ENCODE measurements at regions of chr2 and their contacts with region 1.

Region 1: GRCh38 chr2:168607992-168608391 is 151.9 kb downstream of the CERS6 start:
- DNase-seq: peak; percentile 44
- H3K4me3 Mint-ChIP-seq: no peak overlapping the region
- H3K27ac Mint-ChIP-seq: peak overlapping the region; percentile 86
- H3K4me1 Mint-ChIP-seq: peaks cover 33% of the 10 kb centered on the region
- H3K27me3 Mint-ChIP-seq: no peaks in the 10 kb centered on the region
- CTCF ChIP-seq: no peak

Region 2: GRCh38 chr2:168583064-168583709 is 24.8 kb before region 1 on chr2:
- CTCF ChIA-PET with region 1: no interaction called
- POLR2A ChIA-PET with region 1: interaction called, 15 read pairs
- intact Hi-C with region 1: no loop called
- DNase-seq: peak; percentile 22
- H3K4me3 Mint-ChIP-seq: peak overlapping the region; percentile 17
- H3K27ac Mint-ChIP-seq: peak overlapping the region; percentile 92
- H3K4me1 Mint-ChIP-seq: peaks cover 38% of the 10 kb centered on the region
- H3K27me3 Mint-ChIP-seq: no peaks in the 10 kb centered on the region
- CTCF ChIP-seq: no peak

Region 3: DNA sequence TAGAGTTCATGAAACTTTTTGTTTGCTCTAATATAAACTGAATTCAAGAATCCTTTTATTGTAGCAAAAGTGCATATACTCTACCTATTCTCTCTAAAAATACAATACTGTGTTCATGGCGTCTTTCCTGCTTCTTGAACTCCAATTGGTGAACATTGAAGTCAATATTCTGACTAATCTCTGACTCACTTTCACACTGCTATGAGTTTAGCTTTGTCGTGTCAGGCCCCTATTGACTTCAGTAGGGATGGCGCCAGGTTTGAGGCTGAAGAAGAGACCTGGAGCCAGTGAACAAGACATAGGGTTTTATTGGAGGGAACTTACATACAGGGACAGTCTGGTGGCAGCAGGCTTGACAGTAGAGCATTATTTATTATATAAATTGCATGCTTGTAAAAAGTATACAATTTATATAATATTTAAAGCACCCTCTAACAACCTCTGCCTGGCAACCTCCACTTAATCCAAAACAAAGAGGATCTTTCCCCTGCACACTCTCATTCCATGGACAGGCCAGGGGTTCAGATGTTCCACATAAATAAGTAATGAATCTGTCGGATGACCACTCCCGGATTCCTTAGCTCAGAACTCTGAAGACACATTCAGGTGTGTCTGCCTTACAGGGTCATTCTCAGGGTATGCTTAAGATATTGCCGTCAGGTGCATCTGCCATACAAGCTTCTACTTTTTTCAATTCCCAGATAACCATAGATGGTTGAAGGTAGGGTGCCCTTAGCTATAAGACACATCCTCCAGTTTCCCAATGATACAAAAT is 10.9 kb before region 1 on chr2:
- CTCF ChIA-PET with region 1: no interaction called
- POLR2A ChIA-PET with region 1: interaction called, 15 read pairs
- intact Hi-C with region 1: no loop called
- DNase-seq: peak; percentile 61
- H3K4me3 Mint-ChIP-seq: no peak overlapping the region
- H3K27ac Mint-ChIP-seq: no peak overlapping the region
- H3K4me1 Mint-ChIP-seq: peaks cover 18% of the 10 kb centered on the region
- H3K27me3 Mint-ChIP-seq: no peaks in the 10 kb centered on the region
- CTCF ChIP-seq: no peak